PC-9 (cell line): ENCODE measurements at regions of chr19 and their contacts with region 1.

Region 1: DNA sequence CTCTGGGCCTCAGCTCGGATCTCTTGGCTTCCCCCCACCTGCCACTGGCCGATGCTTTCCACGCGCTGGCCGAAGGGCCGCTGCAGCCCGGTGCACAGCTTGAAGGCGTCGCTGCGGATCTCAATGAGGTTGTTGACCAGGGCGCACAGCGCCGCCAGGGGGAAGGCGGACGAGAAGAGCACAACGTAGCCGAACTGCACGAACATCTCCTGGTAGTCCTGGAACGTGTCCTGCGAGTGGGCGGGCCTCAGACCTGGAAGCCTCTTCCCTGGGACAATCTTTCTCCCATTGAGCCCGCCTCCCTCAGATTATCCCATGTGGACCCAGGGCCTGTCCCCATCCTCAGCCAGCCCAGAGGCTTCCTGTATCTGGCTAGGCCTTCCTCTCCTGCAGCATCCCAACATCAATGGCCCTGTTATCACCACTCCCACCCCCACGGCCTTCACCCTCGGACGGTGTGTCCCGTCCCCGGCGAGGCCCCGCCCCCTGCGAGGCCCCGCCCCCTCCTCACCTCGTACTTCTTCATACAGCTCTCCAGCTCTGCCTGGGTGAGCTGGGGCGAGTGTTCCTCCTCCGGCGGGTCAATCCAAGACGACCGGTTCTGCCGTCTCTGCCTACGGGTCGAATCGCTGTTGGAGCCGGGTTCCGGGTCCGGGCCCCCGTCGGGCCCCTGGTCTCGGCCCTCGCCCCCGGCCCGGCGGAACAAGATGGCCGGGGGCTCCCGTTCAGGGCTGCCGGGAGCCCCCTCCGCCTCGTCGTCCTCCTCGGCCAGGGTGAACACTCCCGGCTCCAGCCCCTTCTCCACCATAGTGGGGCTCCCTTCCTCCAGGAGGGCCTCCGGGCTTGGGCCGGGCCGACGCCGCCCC is 6.8 kb downstream of the ANO8 start:
- DNase-seq: peak; percentile 86 to 87
- H3K4me3 ChIP-seq: peak overlapping the region; percentile 79
- H3K27ac ChIP-seq: peak overlapping the region; percentile 33; the same call in 1 of the 2 replicates
- H3K4me1 ChIP-seq: peaks cover 23% of the 10 kb centered on the region
- H3K27me3 ChIP-seq: no peaks in the 10 kb centered on the region
- CTCF ChIP-seq: peak; percentile 70

Region 2: DNA sequence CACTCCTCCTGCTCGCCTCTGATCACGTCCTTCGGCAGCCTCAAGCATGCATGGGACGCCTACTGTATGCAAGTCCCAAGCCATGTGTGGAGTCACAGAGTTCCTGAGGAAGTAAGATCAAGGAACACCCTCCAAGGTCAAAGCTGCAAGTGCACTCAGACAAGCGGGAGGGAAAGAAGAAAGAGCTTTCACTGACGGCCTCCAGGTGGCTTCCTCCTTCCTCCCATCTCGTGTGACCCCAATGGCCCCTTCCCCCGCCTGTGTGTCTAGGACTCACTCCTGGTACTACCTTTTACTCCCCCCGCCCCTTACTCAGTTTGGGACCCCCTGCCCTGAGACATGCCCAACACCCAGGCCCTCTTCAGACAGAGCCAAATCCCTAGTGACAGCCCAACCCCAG is 258.7 kb before region 1 on chr19:
- CTCF ChIA-PET with region 1: no interaction called
- POLR2A ChIA-PET with region 1: interaction called, 12 read pairs
- intact Hi-C with region 1: no loop called
- DNase-seq: no peak
- H3K4me3 ChIP-seq: no peak overlapping the region
- H3K27ac ChIP-seq: no peak overlapping the region
- H3K4me1 ChIP-seq: peaks cover 10% of the 10 kb centered on the region
- H3K27me3 ChIP-seq: no peaks in the 10 kb centered on the region
- CTCF ChIP-seq: no peak

Region 3: DNA sequence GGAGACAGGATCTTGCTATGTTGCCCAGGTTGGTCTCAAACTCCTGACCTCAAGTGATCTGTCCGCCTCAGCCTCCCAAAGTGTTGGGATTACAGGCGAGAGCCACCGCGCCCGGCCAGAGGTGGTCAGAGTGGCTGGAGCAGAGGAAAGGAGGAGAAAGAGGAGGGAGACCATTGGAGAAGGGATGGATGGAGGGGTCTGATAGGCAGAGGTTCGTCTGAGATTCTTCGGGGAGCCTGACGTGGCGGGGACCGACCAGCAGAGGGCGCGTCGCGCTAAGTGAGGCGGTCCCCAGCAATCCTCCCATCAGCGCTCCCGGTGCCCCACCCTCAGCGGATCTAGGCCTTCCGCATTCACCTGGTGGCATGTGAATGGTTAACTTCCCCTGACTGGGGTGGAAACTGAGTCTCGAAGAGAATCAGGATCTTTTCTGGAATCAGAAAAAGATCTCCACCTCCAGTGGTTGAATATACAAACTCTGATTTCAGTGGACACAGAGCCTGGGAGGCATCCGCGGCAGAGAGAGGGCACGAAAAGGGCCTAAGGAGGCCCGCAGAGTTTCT is 18.3 kb after region 1 on chr19:
- CTCF ChIA-PET with region 1: no interaction called
- POLR2A ChIA-PET with region 1: interaction called, 21 read pairs
- intact Hi-C with region 1: no loop called
- DNase-seq: peak in 1 of 2 experiments; percentile 79
- H3K4me3 ChIP-seq: no peak overlapping the region
- H3K27ac ChIP-seq: no peak overlapping the region
- H3K4me1 ChIP-seq: peaks cover 10% of the 10 kb centered on the region
- H3K27me3 ChIP-seq: no peaks in the 10 kb centered on the region
- CTCF ChIP-seq: peak; percentile 94

Region 4: DNA sequence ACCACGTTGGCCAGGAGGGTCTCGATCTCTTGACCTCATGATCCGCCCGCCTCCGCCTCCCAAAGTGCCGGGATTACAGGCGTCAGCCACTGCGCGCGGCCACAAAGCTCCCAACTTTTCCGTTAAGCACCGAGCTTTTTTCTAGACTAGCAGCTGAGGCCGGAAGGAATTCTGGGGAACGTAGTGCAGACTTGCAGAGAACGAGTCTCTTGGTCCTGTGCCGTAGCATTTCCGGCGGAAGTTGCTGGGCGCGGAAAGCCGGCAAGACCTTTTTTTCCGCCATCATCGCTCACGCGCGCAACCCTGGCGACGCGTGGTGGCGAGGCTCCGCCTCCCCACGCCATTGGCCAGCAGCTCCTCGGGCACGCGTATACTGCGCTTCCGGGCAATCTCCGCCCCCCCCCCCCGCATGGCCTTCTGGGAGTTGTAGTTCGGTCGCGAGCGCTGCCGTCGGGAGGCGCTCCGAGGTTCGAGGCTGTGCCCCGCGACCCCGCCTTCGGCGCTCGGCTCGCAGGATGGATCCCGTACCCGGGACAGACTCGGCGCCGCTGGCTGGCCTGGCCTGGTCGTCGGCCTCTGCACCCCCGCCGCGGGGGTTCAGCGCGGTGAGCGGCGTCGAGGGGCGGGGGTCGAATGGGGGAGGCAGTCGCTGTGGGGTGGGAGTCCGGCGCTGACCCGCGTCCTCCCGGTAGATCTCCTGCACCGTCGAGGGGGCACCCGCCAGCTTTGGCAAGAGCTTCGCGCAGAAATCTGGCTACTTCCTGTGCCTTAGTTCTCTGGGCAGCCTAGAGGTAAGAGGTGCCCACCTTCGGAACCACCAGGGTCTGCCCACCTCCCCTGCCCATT is 92.0 kb after region 1 on chr19 and contains the start of gene MVB12A:
- CTCF ChIA-PET with region 1: no interaction called
- POLR2A ChIA-PET with region 1: interaction called, 13 read pairs
- intact Hi-C with region 1: no loop called
- DNase-seq: peak; percentile 96 to 98
- H3K4me3 ChIP-seq: peak within 1 kb of the TSS; percentile 82
- H3K27ac ChIP-seq: peak within 1 kb of the TSS; percentile 56
- H3K4me1 ChIP-seq: peaks cover 15% of the 10 kb centered on the region
- H3K27me3 ChIP-seq: no peaks in the 10 kb centered on the region
- CTCF ChIP-seq: no peak
- total RNA-seq, gene MVB12A: 58.1 and 80.0 TPM in 2 replicates